H1 (cell line): ENCODE measurements at regions of chr9 and their contacts with region 1.

Region 1: DNA sequence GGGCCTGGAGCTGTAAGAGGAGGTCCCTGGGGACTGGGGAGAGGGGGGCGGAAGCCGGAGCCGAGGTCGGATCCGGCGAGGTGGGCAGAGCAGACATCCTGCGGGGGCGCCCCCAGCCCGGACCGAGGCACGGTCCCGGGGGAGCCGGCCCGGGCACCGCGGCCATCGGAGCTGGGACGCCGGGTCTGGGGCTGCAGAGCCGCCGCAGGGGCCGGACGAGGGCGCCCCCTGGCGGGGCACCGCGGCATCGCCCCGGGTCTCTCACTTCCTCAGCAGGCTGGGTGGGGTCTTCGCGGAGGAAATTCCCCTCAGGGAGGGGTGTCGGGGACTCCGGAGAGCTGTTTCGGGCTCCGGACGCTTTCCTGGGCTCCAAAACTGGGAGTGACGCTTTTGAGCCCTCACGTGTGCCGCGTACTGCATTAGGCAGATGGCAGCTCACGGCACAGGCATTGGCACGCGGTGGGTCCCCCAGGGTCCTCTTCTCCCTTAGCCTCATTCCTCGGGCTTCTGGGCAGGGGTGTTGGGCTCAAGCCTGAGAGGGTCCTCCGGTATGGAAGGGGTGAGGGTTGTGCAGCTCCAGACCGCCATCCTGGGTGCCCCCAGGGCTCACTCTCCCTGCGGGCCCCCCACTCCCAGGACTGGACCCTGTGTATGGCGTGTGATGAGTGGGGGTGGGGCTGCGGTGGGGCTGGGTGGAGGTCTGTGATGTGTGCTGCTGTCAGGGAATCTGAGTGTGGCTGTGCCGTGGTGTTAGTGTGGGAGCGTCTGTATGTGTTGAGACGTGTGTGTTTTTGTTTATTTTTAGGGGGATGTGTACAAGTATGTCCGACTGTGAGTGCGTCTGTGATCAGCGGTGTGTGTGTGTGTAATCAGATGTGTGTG is 29.6 kb downstream of the LHX2 start:
- DNase-seq: peak in 1 of 2 experiments; percentile 93
- H3K4me3 ChIP-seq: peak overlapping the region; percentile 16 to 61 (median 32); a peak in 7 of 8 replicates
- H3K27ac ChIP-seq: no peak overlapping the region
- H3K4me1 ChIP-seq: peaks cover 0 to 5% (median 3%) of the 10 kb centered on the region in 4 experiments; a peak in 3 of 7 replicates
- H3K27me3 ChIP-seq: peaks cover 12 to 62% (median 49%) of the 10 kb centered on the region in 4 experiments
- CTCF ChIP-seq: peak; percentile 81 to 89 (median 88)
- EP300 ChIP-seq: no peak; a peak in 1 of 3 replicates
- POLR2A ChIP-seq: no peak
- RAD21 ChIP-seq: peak; percentile 70 to 84

Region 2: DNA sequence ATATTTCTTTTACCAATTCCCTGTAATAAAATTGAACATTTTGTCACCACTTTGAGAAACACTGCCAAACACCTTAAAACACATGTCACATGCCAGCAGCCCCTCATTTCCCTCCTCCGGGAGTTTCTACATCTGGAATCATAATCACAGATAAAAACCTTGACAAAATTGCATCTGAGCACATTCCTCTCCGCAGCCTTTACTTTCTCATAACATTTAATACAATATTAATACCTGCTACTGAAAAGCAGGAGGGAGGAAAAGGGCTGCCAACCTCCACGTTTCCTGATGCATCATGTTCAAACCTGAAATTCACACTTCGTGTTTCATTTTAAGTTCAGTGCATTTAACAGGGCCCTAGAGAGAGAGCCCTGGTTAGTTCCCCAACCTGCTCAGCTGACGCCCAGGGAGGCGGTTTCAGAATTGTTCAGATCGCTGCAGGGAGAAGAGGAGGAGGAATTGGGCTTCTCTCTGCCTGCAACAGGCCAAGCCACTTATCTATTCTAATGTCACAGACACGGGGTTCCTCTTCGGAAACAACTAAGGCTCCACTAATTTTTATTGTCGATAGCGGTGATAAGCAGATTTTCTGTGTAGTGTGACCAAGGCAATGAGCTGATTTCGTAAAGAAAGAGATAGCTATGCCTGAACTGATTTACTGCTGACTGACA is 34.6 kb before region 1 on chr9:
- CTCF ChIA-PET with region 1: interaction called, 25 read pairs
- POLR2A ChIA-PET with region 1: no interaction called
- DNase-seq: no peak
- H3K4me3 ChIP-seq: no peak overlapping the region
- H3K27ac ChIP-seq: no peak overlapping the region
- H3K4me1 ChIP-seq: peaks cover 2 to 40% (median 21%) of the 10 kb centered on the region in 4 experiments
- H3K27me3 ChIP-seq: peaks cover 88 to 98% (median 94%) of the 10 kb centered on the region in 4 experiments
- CTCF ChIP-seq: no peak
- EP300 ChIP-seq: no peak
- POLR2A ChIP-seq: no peak
- RAD21 ChIP-seq: no peak

Region 3: GRCh38 chr9:124011420-124012301 is 29.5 kb before region 1 on chr9 and contains the start of gene LHX2:
- CTCF ChIA-PET with region 1: interaction called, 25 read pairs
- POLR2A ChIA-PET with region 1: no interaction called
- DNase-seq: peak; percentile 88
- H3K4me3 ChIP-seq: peak within 1 kb of the TSS; percentile 14 to 56 (median 30); a peak in 6 of 8 replicates
- H3K27ac ChIP-seq: no peak within 1 kb of the TSS
- H3K4me1 ChIP-seq: peaks cover 16 to 65% (median 26%) of the 10 kb centered on the region in 4 experiments
- H3K27me3 ChIP-seq: peaks cover 91 to 98% (median 96%) of the 10 kb centered on the region in 4 experiments
- CTCF ChIP-seq: peak in 1 of 3 experiments; percentile 25; a peak in 2 of 4 replicates
- EP300 ChIP-seq: peak in 1 of 2 experiments; percentile 30; a peak in 1 of 3 replicates
- POLR2A ChIP-seq: no peak
- RAD21 ChIP-seq: 0 out of 4 replicates have a peak, but pooled peaks of 1 of the 2 experiments have one; percentile 10
- total RNA-seq, gene LHX2: 0.11 and 0.17 TPM in 2 replicates

Region 4: GRCh38 chr9:124022201-124023121 is 18.7 kb before region 1 on chr9:
- CTCF ChIA-PET with region 1: interaction called, 31 read pairs
- POLR2A ChIA-PET with region 1: no interaction called
- DNase-seq: peak in 1 of 2 experiments; percentile 83
- H3K4me3 ChIP-seq: peak overlapping the region in 1 of 4 experiments; percentile 51; a peak in 2 of 8 replicates
- H3K27ac ChIP-seq: no peak overlapping the region
- H3K4me1 ChIP-seq: peaks cover 10 to 19% (median 13%) of the 10 kb centered on the region in 4 experiments
- H3K27me3 ChIP-seq: peaks cover 33 to 69% (median 55%) of the 10 kb centered on the region in 4 experiments
- CTCF ChIP-seq: peak in 1 of 3 experiments; percentile 23; a peak in 1 of 4 replicates
- EP300 ChIP-seq: no peak
- POLR2A ChIP-seq: no peak
- RAD21 ChIP-seq: peak in 1 of 2 experiments; percentile 5; a peak in 2 of 4 replicates

Region 5: GRCh38 chr9:124030969-124031451 is 10.2 kb before region 1 on chr9:
- CTCF ChIA-PET with region 1: interaction called, 11 read pairs
- POLR2A ChIA-PET with region 1: interaction called, 3 read pairs
- DNase-seq: no peak
- H3K4me3 ChIP-seq: no peak overlapping the region
- H3K27ac ChIP-seq: no peak overlapping the region
- H3K4me1 ChIP-seq: peaks cover 0 to 9% (median 4%) of the 10 kb centered on the region in 4 experiments; a peak in 5 of 7 replicates
- H3K27me3 ChIP-seq: peaks cover 0 to 13% (median 11%) of the 10 kb centered on the region in 4 experiments; a peak in 6 of 7 replicates
- CTCF ChIP-seq: no peak
- EP300 ChIP-seq: no peak
- POLR2A ChIP-seq: no peak
- RAD21 ChIP-seq: no peak

Region 6: GRCh38 chr9:124164811-124165210 is 123.6 kb after region 1 on chr9:
- CTCF ChIA-PET with region 1: no interaction called
- POLR2A ChIA-PET with region 1: no interaction called
- DNase-seq: no peak
- H3K4me3 ChIP-seq: no peak overlapping the region
- H3K27ac ChIP-seq: no peak overlapping the region
- H3K4me1 ChIP-seq: no peaks in the 10 kb centered on the region
- H3K27me3 ChIP-seq: no peaks in the 10 kb centered on the region
- CTCF ChIP-seq: no peak
- EP300 ChIP-seq: no peak
- POLR2A ChIP-seq: no peak
- RAD21 ChIP-seq: no peak